Panc1 (cell line): ENCODE measurements at regions of chr1 and their contacts with region 1.

Region 1: DNA sequence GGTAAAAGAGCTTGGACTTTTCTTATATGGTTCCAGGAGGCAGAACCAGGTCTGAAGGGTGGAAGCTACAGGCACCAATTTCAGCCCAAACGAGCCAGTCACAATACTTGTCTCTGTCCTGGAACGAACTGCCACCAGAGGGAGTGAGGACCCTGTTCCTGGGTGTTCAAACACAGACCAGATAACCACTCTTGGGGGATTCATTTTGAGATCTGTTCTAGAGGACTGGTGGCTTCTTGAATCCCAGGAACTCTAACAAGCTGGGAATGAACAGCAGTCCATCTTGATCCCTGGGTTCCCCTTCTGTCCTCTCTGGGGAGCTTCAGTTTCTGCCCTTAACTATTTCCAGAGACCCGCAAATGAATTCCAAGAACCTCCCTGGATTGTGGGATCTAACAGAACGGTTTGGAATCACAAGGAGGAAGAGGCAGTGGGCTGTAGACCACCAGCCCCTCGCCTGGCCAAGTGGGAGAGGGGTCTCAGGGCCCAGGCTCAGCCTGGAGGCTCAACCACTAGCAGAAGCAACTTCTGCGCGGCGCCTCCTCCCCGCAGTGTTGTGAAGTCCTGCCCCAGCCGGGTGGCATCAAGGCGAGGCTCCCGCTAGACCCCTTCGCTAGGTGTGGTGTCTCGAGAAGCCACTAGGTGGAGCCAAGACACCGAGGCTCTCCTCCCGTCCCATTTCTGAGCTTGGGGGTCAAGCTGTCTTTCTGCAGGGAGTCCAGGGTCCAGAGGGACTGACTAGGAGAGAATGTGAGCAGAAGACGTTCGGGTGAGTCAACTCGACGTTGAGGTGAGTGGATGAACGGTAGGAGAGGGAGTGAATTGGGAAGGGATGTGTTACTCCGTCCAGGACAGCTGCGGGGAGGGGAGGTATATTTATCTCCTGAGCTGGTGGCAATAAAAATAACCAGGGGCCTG is 12.1 kb upstream of the NES start:
- DNase-seq: peak; percentile 78
- ATAC-seq: peak; percentile 88
- H3K4me3 ChIP-seq: peak overlapping the region; percentile 39 to 63
- H3K27ac ChIP-seq: peak overlapping the region; percentile 95
- H3K4me1 ChIP-seq: peaks cover 50% of the 10 kb centered on the region
- H3K27me3 ChIP-seq: no peaks in the 10 kb centered on the region
- CTCF ChIP-seq: peak; percentile 93

Region 2: GRCh38 chr1:156677616-156678596 is 11.4 kb before region 1 on chr1:
- CTCF ChIA-PET with region 1: interaction called, 12 read pairs
- POLR2A ChIA-PET with region 1: interaction called, 4 read pairs
- in situ Hi-C with region 1: no loop called
- intact Hi-C with region 1: no loop called
- DNase-seq: no peak
- ATAC-seq: peak; percentile 58
- H3K4me3 ChIP-seq: peak overlapping the region in 1 of 2 experiments; percentile 57; a peak in 3 of 4 replicates
- H3K27ac ChIP-seq: peak overlapping the region; percentile 72
- H3K4me1 ChIP-seq: peaks cover 18% of the 10 kb centered on the region
- H3K27me3 ChIP-seq: no peaks in the 10 kb centered on the region
- CTCF ChIP-seq: peak; percentile 93

Region 3: DNA sequence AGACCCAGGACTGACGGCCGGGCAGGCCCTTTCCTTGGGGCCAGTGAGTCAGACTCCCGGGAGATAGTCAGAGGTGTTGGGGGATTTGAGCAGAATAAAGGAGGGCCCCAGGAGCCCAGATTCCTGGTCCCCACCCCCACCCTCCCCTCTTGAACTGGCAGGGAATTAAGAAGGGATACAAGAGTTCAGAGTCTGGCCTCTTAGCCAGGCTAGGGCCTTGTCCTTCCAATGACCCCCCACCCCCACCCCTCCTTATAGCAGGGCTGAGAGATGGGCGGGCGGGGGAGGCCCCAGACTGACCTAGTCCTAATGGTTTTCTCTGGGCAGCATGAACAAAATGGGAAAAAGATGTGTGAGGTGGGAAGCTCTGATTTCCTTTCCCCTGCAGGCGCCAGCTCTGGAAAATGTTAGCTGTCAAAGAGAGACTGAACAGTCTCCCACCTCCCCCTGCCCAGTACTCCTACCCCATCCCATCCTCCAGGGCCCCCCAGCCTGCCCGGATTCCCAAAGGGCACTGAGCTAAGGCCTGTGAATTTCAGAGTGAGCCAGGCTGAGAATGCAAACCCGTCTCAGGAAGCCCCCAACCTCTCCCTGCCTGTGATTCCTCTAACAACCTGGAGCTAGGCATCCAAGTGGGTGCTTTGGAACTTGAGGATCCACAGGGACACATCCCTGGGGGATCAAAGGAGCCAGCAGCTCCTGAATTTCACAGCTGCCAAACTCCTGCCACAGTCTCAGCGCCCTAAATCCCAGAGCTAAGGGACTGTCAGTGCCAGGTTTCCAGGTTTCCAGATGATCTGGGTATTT is 21.9 kb after region 1 on chr1:
- CTCF ChIA-PET with region 1: interaction called, 96 read pairs
- POLR2A ChIA-PET with region 1: interaction called, 6 read pairs
- in situ Hi-C with region 1: no loop called
- intact Hi-C with region 1: no loop called
- DNase-seq: no peak
- ATAC-seq: no peak
- H3K4me3 ChIP-seq: no peak overlapping the region
- H3K27ac ChIP-seq: peak overlapping the region; percentile 93
- H3K4me1 ChIP-seq: peaks cover 65% of the 10 kb centered on the region
- H3K27me3 ChIP-seq: no peaks in the 10 kb centered on the region
- CTCF ChIP-seq: no peak

Region 4: GRCh38 chr1:156725683-156726280 is 36.5 kb after region 1 on chr1:
- CTCF ChIA-PET with region 1: interaction called, 118 read pairs
- POLR2A ChIA-PET with region 1: interaction called, 12 read pairs
- in situ Hi-C with region 1: no loop called
- intact Hi-C with region 1: loop called (anchors 1 kb)
- DNase-seq: peak; percentile 77
- ATAC-seq: peak; percentile 78
- H3K4me3 ChIP-seq: peak overlapping the region; percentile 87 to 99
- H3K27ac ChIP-seq: peak overlapping the region; percentile 87
- H3K4me1 ChIP-seq: peaks cover 33% of the 10 kb centered on the region
- H3K27me3 ChIP-seq: no peaks in the 10 kb centered on the region
- CTCF ChIP-seq: peak; percentile 91

Region 5: GRCh38 chr1:156892190-156893047 is 203.1 kb after region 1 on chr1:
- CTCF ChIA-PET with region 1: interaction called, 15 read pairs
- POLR2A ChIA-PET with region 1: no interaction called
- in situ Hi-C with region 1: no loop called
- intact Hi-C with region 1: no loop called
- DNase-seq: no peak
- ATAC-seq: peak; percentile 83
- H3K4me3 ChIP-seq: peak overlapping the region; percentile 31 to 62
- H3K27ac ChIP-seq: peak overlapping the region; percentile 56; the same call in 1 of the 2 replicates
- H3K4me1 ChIP-seq: peaks cover 42% of the 10 kb centered on the region
- H3K27me3 ChIP-seq: no peaks in the 10 kb centered on the region
- CTCF ChIP-seq: peak; percentile 95